AG04449 (cell line): ENCODE measurements at regions of chr15 and their contacts with region 1.

Region 1: DNA sequence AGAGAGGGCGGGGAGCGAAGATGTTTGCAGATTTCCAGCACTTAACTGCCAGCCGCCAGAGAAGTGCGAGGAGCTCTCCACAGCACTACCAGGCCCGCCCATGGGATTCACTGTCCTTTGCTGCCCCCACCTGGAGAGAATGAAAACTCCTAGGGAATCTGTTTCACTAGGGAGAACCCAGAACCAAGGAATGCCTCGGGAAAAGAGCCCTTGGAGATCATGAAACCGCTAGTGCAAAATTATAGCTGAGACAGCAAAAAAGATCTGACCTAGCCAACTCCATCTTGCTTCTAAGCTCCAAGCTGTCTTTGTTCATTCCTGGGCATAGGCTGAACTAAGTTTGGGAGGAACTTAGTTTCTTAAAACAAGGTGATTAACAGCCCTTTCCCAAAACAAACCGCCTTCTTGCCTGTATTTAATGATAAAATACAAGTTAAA is 82.6 kb upstream of the GCNT3 start:
- DNase-seq: peak; percentile 33
- H3K4me3 ChIP-seq: no peak overlapping the region
- CTCF ChIP-seq: peak; percentile 78

Region 2: DNA sequence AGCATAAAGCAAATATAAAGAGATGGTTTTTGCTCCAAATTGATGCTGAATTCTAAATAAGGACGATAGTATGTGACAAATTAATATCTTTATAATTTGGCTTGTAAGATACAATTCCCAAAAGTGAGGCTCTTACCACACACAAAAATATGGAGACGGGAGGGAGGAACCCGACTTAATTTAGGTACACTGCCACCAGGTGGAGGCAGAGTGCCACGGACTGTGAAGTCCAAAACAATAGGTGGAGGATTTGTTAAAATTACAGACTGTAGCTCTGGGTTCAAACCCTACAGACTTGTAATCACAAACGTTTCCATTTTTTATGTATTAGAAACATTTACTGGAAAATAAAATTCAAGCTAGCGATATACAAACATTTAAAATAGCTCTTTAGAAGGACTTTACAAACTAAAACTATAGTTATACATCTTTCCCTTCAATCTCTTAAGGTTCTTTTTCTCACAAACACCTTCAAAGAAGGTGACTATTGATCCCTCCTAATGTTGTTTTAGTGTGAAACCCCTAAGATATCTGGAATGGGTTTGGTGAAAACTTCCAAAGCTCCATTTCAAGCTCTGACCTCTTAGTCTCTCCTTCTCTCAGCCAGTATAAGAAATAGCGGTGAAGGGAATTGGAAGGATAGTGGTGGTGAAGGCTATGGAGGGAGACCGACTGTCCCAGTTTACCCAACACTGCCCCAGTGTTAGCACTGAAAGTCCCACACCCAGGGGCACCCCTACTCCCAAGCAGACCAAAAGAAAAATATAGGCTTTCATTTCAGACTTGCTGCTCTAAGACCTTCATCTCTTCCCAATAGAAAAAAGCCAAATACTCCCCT is 1301.1 kb before region 1 on chr15:
- CTCF ChIA-PET with region 1: interaction called, 16 read pairs
- POLR2A ChIA-PET with region 1: no interaction called
- DNase-seq: peak; percentile 31
- H3K4me3 ChIP-seq: no peak overlapping the region
- CTCF ChIP-seq: peak; percentile 74

Region 3: GRCh38 chr15:58987489-58988005 is 541.4 kb before region 1 on chr15 and contains the start of gene RNF111:
- CTCF ChIA-PET with region 1: interaction called, 18 read pairs
- POLR2A ChIA-PET with region 1: no interaction called
- DNase-seq: peak; percentile 90
- H3K4me3 ChIP-seq: peak within 1 kb of the TSS; percentile 99
- CTCF ChIP-seq: no peak

Region 4: DNA sequence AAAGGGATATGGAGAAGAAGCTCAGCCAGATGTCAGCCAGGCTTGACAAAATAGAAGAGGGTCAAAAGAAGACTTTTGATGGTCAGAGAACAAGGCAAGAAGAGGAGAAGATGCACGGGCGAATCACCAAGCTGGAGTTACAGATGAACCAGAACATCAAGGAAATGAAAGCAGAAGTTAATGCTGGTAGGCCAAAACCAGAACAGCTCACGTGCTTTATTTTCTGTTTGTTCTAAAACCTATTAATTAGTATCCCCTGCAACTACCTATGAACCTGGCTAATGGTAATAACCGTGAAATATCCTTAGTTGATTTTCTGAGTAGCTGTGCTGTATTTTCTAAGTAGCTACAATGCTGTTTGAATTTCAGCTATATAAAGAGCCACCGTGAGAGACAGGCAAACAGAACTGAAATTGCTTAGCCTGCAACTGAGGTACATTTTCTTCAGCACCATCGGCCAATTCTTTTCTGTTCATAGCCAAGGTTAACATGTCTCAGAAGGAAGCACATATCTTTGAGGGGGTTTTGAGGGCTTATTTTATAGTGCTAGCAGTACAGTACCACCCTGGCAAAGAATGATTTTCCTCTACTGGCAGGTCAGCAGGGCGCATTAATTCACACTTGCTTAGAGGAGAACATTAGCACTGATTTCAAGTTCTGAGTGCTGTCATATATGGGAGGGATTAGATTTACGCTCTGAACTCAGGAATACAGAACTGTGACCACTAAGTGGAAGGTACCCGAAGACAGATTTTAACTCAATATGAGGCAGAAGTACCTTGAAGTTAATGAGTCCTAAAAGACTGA is 12.1 kb before region 1 on chr15:
- CTCF ChIA-PET with region 1: interaction called, 141 read pairs
- POLR2A ChIA-PET with region 1: no interaction called
- DNase-seq: no peak
- H3K4me3 ChIP-seq: no peak overlapping the region
- CTCF ChIP-seq: no peak

Region 5: GRCh38 chr15:59632714-59633113 is 103.7 kb after region 1 on chr15:
- CTCF ChIA-PET with region 1: interaction called, 38 read pairs
- POLR2A ChIA-PET with region 1: no interaction called
- DNase-seq: no peak
- H3K4me3 ChIP-seq: no peak overlapping the region
- CTCF ChIP-seq: peak; percentile 23